Common myeloid progenitor, CD34-positive (primary cell): ENCODE measurements at regions of chr7 and their contacts with region 1.

Region 1: DNA sequence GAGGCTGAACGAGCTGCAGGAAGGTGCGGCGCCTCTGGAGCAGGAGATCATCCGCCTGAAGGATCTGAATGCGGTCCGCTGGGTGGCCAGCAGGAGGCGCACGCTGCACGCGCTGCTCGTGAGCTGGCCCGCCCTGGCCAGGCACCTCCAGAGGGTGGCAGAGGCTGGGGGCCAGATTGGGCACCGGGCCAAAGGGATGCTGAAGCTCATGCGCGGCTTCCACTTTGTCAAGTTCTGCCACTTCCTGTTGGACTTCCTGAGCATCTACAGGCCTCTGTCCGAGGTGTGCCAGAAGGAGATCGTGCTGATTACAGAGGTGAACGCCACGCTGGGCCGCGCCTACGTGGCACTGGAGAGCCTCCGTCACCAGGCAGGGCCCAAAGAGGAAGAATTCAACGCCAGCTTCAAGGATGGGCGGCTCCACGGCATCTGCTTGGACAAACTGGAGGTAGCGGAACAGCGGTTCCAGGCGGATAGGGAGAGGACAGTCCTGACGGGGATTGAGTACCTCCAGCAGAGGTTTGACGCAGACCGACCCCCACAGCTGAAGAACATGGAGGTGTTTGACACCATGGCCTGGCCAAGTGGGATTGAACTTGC is 12.2 kb upstream of the ATP6V0E2 start:
- DNase-seq: peak; percentile 22 to 44 (median 38)
- H3K4me3 ChIP-seq: no peak overlapping the region
- H3K27ac ChIP-seq: no peak overlapping the region
- H3K4me1 ChIP-seq: peaks cover 0 to 39% (median 32%) of the 10 kb centered on the region in 4 experiments
- H3K27me3 ChIP-seq: no peaks in the 10 kb centered on the region

Region 2: GRCh38 chr7:149872419-149873073 is 11.0 kb after region 1 on chr7:
- CTCF ChIA-PET with region 1: interaction called, 20 read pairs
- POLR2A ChIA-PET with region 1: no interaction called
- DNase-seq: peak; percentile 53 to 70 (median 54)
- H3K4me3 ChIP-seq: peak overlapping the region in 6 of 7 experiments; percentile 65 to 77 (median 71)
- H3K27ac ChIP-seq: no peak overlapping the region
- H3K4me1 ChIP-seq: peaks cover 10 to 68% (median 58%) of the 10 kb centered on the region in 4 experiments
- H3K27me3 ChIP-seq: no peaks in the 10 kb centered on the region

Region 3: DNA sequence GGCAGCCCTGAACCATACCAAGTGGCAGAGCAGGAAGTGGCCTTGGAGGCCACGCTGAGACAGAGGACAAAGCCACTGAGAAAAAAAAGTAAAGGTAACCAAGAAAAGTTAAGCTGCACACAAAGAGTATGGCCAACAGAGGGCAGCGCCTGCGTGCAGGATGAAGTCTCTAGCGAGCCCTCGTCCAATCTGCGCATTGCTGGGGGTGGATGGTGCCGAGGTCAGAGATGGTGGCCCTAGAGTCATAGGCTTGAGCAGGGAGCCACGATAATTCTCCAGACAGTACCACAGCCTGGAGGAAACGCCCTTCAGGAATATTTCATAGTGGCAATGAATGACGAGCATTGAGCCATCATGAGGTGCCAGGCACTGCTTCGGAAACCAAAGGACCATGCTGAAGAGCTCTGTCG is 21.9 kb after region 1 on chr7:
- CTCF ChIA-PET with region 1: interaction called, 12 read pairs
- POLR2A ChIA-PET with region 1: no interaction called
- DNase-seq: peak; percentile 65 to 77 (median 74)
- H3K4me3 ChIP-seq: no peak overlapping the region
- H3K27ac ChIP-seq: no peak overlapping the region
- H3K4me1 ChIP-seq: peaks cover 0 to 18% (median 9%) of the 10 kb centered on the region in 4 experiments
- H3K27me3 ChIP-seq: no peaks in the 10 kb centered on the region

Region 4: GRCh38 chr7:150340024-150340749 is 478.6 kb after region 1 on chr7:
- CTCF ChIA-PET with region 1: no interaction called
- POLR2A ChIA-PET with region 1: no interaction called
- DNase-seq: peak in 2 of 3 donors; percentile 71 to 77
- H3K4me3 ChIP-seq: peak overlapping the region in 3 of 7 experiments; percentile 32 to 57 (median 43)
- H3K27ac ChIP-seq: no peak overlapping the region
- H3K4me1 ChIP-seq: peaks cover 2 to 30% (median 19%) of the 10 kb centered on the region in 4 experiments
- H3K27me3 ChIP-seq: peaks cover 0 to 23% (median 3%) of the 10 kb centered on the region in 5 experiments